ENCODE measurements at regions of chr5 and their contacts with region 1.

Region 1: DNA sequence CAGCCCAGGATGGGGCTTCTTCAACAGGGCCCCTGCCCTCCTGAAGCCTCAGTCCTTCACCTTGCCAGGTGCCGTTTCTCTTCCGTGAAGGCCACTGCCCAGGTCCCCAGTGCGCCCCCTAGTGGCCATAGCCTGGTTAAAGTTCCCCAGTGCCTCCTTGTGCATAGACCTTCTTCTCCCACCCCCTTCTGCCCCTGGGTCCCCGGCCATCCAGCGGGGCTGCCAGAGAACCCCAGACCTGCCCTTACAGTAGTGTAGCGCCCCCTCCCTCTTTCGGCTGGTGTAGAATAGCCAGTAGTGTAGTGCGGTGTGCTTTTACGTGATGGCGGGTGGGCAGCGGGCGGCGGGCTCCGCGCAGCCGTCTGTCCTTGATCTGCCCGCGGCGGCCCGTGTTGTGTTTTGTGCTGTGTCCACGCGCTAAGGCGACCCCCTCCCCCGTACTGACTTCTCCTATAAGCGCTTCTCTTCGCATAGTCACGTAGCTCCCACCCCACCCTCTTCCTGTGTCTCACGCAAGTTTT is 23.6 kb downstream of the PCDHGC5 start:
- DNase-seq: peak; percentile 99
- ATAC-seq: peak; percentile 82
- H3K4me3 Mint-ChIP-seq: peak overlapping the region; percentile 87
- H3K27ac Mint-ChIP-seq: no peak overlapping the region
- H3K4me1 Mint-ChIP-seq: peaks cover 61% of the 10 kb centered on the region
- H3K27me3 Mint-ChIP-seq: no peaks in the 10 kb centered on the region
- CTCF ChIP-seq: peak; percentile 99

Region 2: GRCh38 chr5:141369994-141370848 is 142.2 kb before region 1 on chr5 and contains the start of gene PCDHGB3:
- CTCF ChIA-PET with region 1: interaction called, 19 read pairs
- POLR2A ChIA-PET with region 1: no interaction called
- DNase-seq: peak; percentile 56
- ATAC-seq: peak; percentile 95
- H3K4me3 Mint-ChIP-seq: peak within 1 kb of the TSS; percentile 61
- H3K27ac Mint-ChIP-seq: peak within 1 kb of the TSS; percentile 91
- H3K4me1 Mint-ChIP-seq: peaks cover 5% of the 10 kb centered on the region
- H3K27me3 Mint-ChIP-seq: peaks cover 8% of the 10 kb centered on the region
- CTCF ChIP-seq: no peak
- total RNA-seq, gene PCDHGB3: 3.3 to 4.2 TPM (median 3.5 TPM) in 3 replicates

Region 3: GRCh38 chr5:141430332-141431113 is 81.9 kb before region 1 on chr5 and contains the start of gene PCDHGA12:
- CTCF ChIA-PET with region 1: interaction called, 28 read pairs
- POLR2A ChIA-PET with region 1: interaction called, 4 read pairs
- DNase-seq: no peak
- ATAC-seq: peak; percentile 43; the same call in 1 of the 2 replicates
- H3K4me3 Mint-ChIP-seq: no peak within 1 kb of the TSS
- H3K27ac Mint-ChIP-seq: no peak within 1 kb of the TSS
- H3K4me1 Mint-ChIP-seq: no peaks in the 10 kb centered on the region
- H3K27me3 Mint-ChIP-seq: no peaks in the 10 kb centered on the region
- CTCF ChIP-seq: no peak
- total RNA-seq, gene PCDHGA12: 1.6 to 2.1 TPM (median 1.9 TPM) in 3 replicates

Region 4: GRCh38 chr5:141484641-141485311 is 27.7 kb before region 1 on chr5 and contains the start of gene PCDHGC4:
- CTCF ChIA-PET with region 1: interaction called, 42 read pairs
- POLR2A ChIA-PET with region 1: interaction called, 4 read pairs
- DNase-seq: peak; percentile 84
- ATAC-seq: peak; percentile 89
- H3K4me3 Mint-ChIP-seq: peak within 1 kb of the TSS; percentile 71
- H3K27ac Mint-ChIP-seq: peak within 1 kb of the TSS; percentile 90
- H3K4me1 Mint-ChIP-seq: peaks cover 60% of the 10 kb centered on the region
- H3K27me3 Mint-ChIP-seq: peaks cover 33% of the 10 kb centered on the region
- CTCF ChIP-seq: no peak
- total RNA-seq, gene PCDHGC4: 4.5 to 6.1 TPM (median 5.1 TPM) in 3 replicates

Region 5: GRCh38 chr5:141524604-141525597 is 12.5 kb after region 1 on chr5:
- CTCF ChIA-PET with region 1: interaction called, 103 read pairs
- POLR2A ChIA-PET with region 1: interaction called, 9 read pairs
- DNase-seq: peak; percentile 93
- ATAC-seq: peak; percentile 98
- H3K4me3 Mint-ChIP-seq: no peak overlapping the region
- H3K27ac Mint-ChIP-seq: peak overlapping the region; percentile 87
- H3K4me1 Mint-ChIP-seq: peaks cover 23% of the 10 kb centered on the region
- H3K27me3 Mint-ChIP-seq: no peaks in the 10 kb centered on the region
- CTCF ChIP-seq: peak; percentile 97

Region 6: DNA sequence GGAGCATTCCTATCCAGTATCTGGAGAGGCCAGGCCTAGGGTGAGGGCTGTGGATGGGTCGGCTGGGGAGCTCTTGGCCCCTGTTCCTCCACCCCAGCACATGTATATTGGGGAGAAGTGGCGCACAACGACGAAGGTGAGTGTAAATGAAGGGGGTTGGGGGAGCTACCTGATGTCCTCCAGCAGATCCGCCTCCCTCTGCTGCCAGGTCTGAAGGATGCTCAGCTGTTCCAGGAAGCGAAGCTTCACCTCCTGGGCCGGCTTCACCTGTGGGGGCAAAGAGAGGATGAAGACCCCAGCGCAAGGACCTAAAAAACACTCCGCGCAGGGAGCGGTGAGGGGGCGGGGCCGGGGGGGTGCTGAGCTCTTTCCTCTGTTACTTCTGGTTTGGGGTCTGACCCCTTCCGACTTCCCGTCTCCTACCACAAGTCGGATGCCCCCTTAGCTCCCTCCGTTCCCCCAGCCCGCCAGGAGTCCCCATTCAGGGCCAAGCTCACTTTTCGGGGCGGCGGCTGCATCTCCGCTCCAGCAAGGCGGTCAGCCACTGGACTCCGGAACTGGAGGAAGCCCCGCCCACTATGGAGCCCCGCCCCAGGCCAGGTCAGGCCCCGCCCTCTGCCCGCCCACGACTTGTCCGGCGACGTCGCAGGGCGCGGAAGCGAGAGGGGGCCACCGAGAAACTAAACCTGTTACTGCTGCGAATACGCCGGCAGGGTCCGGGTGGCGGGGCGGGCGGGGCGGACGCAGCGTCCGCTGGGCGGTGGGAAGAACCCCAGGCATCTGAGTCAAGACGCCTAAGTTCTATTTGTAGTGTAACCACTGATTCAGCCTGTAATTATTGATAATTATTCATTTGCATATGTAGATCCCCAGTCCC is 138.6 kb after region 1 on chr5 and contains the start of gene FCHSD1:
- CTCF ChIA-PET with region 1: no interaction called
- POLR2A ChIA-PET with region 1: no interaction called
- DNase-seq: peak; percentile 94
- ATAC-seq: peak; percentile 95
- H3K4me3 Mint-ChIP-seq: peak within 1 kb of the TSS; percentile 99
- H3K27ac Mint-ChIP-seq: peak within 1 kb of the TSS; percentile 96
- H3K4me1 Mint-ChIP-seq: peaks cover 20% of the 10 kb centered on the region
- H3K27me3 Mint-ChIP-seq: no peaks in the 10 kb centered on the region
- CTCF ChIP-seq: no peak
- total RNA-seq, gene FCHSD1: 43.6 to 50.3 TPM (median 44.8 TPM) in 3 replicates